Cardiac septum (tissue), 1 donor: ENCODE measurements at regions of chr13 and their contacts with region 1.

Region 1: GRCh38 chr13:59409211-59409610 is 754.5 kb downstream of the DIAPH3 start:
- DNase-seq: no peak

Region 2: DNA sequence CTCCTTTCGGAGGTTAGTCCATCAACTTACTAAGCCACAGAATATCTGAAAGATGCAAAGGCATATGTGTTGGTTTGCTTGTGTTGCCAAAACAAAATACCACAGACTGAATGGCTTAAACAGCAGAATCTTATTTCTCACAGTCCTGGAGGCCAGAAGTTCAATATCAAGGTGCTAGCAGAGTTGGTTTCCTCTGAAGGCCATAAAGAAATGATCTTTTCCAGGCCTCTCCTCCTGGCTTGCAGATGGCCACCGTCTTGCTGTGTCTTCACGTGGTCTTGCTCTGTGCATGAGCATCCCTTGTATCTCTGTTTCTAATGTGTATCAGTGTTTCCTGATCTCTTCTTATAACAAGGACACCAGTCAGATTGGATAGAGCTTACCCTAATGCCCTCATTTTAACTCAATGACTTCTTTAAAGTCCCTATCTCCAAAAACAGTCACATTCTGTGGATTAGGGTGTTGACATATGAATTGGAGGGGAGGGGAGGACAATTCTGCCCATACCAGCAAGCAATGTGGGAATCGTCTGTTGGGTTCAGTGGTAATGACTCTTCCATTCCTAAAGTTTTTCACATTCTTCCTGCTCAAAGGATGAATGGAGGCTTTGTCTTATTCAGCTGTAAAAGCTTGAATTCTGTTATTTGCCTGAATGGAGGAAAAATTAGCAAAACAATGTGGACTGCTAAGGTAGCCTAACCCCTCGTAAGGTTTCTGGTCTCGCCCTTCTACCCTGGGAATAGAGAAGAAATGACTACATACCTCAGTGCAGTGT is 38.8 kb after region 1 on chr13:
- intact Hi-C with region 1: loop called (anchors 5 kb)
- DNase-seq: no peak

Region 3: DNA sequence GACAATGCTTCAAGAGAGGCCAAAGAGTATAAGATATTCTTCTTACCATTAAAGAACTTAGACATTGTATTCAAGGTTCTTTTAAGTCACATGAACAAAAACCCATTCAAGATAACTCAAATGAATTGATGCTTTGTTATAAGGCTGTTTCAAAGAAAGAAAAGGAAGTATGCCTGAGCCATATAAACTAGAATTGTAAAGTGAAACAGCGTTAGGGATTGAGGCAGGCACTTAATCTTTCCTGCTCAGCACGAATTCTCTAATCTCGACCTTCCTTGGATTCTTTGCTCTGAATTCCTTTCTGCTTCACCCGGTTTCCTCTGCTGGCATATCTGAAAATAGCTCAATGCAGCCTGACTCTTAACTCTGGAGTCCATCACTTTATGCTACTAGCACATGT is 159.1 kb after region 1 on chr13:
- intact Hi-C with region 1: no loop called
- DNase-seq: no peak

Region 4: GRCh38 chr13:59877933-59878332 is 468.7 kb after region 1 on chr13:
- intact Hi-C with region 1: no loop called
- DNase-seq: no peak